ENCODE measurements at regions of chr1 and their contacts with region 1.

Region 1: DNA sequence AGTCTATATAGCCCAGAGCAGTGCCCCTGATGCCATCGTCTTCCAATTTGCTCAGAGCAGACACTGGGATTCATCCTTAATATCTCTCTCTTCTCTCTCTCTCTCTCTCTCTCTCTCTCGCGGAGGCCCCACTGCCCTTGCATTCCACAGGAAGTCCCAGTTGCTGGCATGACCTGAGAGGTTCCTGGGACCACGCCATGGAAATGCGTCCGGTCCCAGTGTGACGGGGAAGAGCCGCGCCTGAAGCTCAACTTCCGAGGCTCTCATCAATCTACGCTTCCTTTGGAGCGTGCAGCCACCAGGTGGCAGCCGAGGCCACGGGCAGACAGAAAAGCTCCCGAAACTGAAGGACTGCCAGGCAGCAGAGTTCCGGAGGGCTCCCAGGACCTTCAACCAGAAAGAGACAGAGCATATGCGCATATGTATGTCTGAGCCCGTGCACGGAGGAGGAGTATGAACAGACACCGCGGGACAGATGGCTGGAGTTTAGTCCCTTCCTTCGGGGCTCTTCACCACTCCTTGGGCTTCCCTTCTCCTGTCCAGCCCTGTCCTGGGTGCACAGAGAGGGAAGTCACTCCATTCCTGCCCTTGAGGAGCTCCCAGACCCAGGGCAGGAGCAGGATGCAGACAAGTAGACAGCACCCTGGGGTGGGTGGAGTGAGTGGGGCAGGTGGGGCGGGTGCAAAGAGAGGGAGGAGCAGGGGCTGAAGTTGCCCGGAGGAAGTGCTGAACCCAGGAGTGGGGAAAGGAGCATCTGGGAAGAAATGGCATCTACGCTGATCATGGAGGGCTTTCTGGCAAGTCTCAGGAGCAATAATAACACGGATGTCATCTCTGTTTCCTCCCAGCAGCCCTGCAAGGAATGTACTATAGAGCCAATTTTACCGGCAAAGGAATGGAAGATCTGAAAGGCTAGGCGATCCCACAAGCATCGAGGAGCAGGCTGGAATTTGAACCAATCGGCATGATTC is 10.5 kb downstream of the PDZK1IP1 start:
- DNase-seq: peak; percentile 91
- ATAC-seq: peak; percentile 88
- H3K4me3 Mint-ChIP-seq: peak overlapping the region; percentile 61
- H3K27ac Mint-ChIP-seq: peak overlapping the region; percentile 68
- H3K4me1 Mint-ChIP-seq: peaks cover 8% of the 10 kb centered on the region
- H3K27me3 Mint-ChIP-seq: peaks cover 22% of the 10 kb centered on the region
- CTCF ChIP-seq: peak; percentile 82

Region 2: DNA sequence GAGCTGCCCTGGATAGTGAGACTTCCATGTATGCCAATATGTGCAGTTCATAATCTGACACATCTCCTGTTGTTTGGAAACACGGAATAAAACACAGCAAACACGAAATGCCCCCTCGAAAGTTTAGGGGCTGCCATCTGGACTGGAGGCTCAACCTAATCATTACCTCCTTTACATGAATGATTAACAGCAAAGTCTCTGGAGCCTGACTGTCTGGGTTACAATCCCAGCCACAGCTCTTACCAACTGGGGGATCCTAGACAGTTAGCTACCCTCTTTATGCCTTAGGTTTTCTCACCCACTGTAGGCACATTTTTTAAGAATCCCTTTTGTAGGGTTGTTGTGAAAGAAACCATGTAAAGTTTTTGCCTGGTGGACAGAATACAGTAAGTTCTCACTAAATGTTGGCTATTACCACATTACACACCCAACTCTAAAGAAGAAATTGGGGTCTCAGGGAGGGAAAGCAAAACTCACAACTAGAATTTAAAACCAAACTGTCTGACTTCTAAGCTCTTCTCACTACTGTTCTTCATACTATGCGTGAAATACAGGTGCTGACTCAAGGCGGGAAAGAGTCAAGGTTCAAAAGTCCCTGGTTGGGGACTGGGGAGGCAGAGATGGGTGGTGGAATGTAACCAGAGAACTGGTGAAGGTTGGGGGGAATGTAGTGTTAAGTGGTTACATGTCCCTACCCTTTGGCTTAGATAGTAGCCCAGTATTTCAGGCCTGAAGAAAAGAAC is 17.8 kb before region 1 on chr1:
- CTCF ChIA-PET with region 1: interaction called, 10 read pairs
- POLR2A ChIA-PET with region 1: no interaction called
- intact Hi-C with region 1: no loop called
- DNase-seq: no peak
- ATAC-seq: no peak
- H3K4me3 Mint-ChIP-seq: no peak overlapping the region
- H3K27ac Mint-ChIP-seq: no peak overlapping the region
- H3K4me1 Mint-ChIP-seq: no peaks in the 10 kb centered on the region
- H3K27me3 Mint-ChIP-seq: peaks cover 28% of the 10 kb centered on the region
- CTCF ChIP-seq: no peak

Region 3: DNA sequence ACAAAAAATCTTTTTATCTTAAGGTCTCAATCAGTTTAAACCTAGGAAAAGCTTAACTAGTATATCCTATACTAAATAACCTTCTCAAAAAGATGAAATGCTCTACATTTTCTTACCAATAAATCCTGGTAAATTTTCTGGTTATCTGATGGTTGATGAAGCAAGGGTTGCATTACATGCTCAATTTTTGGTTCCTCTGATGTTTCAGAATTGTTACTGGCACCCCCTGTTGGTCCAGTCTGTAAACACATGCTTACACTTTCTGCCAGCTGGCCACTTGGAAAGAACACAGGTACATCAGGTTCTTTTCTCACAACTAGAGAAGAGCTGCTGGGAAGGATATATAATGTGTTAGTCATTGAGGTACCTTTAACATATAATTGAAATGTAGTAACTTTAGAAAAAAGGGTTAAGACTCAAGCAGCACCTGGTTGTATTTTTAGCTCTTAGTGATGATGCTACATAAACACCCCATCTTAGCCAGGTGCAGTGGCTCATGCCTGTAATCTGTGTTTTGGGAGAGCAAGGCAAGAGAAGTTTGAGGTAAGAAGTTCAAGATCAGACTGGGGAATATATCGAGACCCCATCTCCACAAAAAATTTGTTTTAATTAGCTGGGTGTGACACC is 83.6 kb after region 1 on chr1:
- CTCF ChIA-PET with region 1: interaction called, 35 read pairs
- POLR2A ChIA-PET with region 1: no interaction called
- intact Hi-C with region 1: no loop called
- DNase-seq: peak; percentile 63
- ATAC-seq: peak; percentile 34
- H3K4me3 Mint-ChIP-seq: no peak overlapping the region
- H3K27ac Mint-ChIP-seq: no peak overlapping the region
- H3K4me1 Mint-ChIP-seq: no peaks in the 10 kb centered on the region
- H3K27me3 Mint-ChIP-seq: no peaks in the 10 kb centered on the region
- CTCF ChIP-seq: peak; percentile 66